Ovary (tissue), 10 donors: ENCODE measurements at regions of chr5 and their contacts with region 1.

Region 1: GRCh38 chr5:140244525-140245025 is 58.3 kb downstream of the PFDN1 start:
- DNase-seq: peak; percentile 88 to 92 (median 90)
- H3K4me3 ChIP-seq: no peak overlapping the region
- H3K27ac ChIP-seq: no peak overlapping the region
- H3K4me1 ChIP-seq: peaks cover 16% of the 10 kb centered on the region
- H3K27me3 ChIP-seq: no peaks in the 10 kb centered on the region
- CTCF ChIP-seq: peak; percentile 78 to 83 (median 80)
- EP300 ChIP-seq: no peak
- POLR2A ChIP-seq: no peak

Region 2: GRCh38 chr5:140346348-140347101 is 102.0 kb after region 1 on chr5 and contains the start of gene HBEGF:
- intact Hi-C with region 1: loop called in 3 of 4 experiments (anchors 5 kb)
- DNase-seq: peak; percentile 78 to 88 (median 87)
- H3K4me3 ChIP-seq: peak within 1 kb of the TSS; percentile 76
- H3K27ac ChIP-seq: peak within 1 kb of the TSS; percentile 17 to 28
- H3K4me1 ChIP-seq: no peaks in the 10 kb centered on the region
- H3K27me3 ChIP-seq: no peaks in the 10 kb centered on the region
- CTCF ChIP-seq: peak; percentile 39 to 50 (median 43)
- EP300 ChIP-seq: no peak
- POLR2A ChIP-seq: peak; percentile 82
- total RNA-seq, gene HBEGF: 1.5 to 14.5 (median 5.6) TPM

Region 3: GRCh38 chr5:140351609-140352334 is 107.2 kb after region 1 on chr5:
- intact Hi-C with region 1: loop called (anchors 2 to 5 kb)
- DNase-seq: peak in 1 of 5 donors; percentile 60
- H3K4me3 ChIP-seq: no peak overlapping the region
- H3K27ac ChIP-seq: no peak overlapping the region
- H3K4me1 ChIP-seq: no peaks in the 10 kb centered on the region
- H3K27me3 ChIP-seq: no peaks in the 10 kb centered on the region
- CTCF ChIP-seq: peak; percentile 69 to 77 (median 75)
- EP300 ChIP-seq: no peak
- POLR2A ChIP-seq: no peak

Region 4: DNA sequence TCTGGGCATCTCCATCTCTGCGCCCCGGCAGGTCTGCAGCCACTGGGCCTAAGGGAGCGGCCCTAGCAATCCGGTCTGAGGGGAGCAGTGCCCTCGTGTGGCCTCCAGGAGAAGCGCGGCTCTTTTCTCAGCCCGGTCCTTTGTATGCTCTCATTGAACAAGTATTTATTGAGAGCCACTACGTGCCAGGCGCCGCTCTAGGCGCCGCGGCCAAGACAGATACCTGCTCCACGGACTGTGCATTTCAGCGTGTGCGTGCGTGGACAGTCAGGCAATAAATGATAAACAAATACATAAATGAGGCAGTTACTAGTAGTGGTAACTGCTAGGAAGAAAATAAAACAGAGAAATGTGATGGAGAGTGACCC is 113.1 kb after region 1 on chr5:
- intact Hi-C with region 1: loop called in 2 of 4 experiments (anchors 2 to 5 kb)
- DNase-seq: peak; percentile 65 to 85 (median 83)
- H3K4me3 ChIP-seq: no peak overlapping the region
- H3K27ac ChIP-seq: no peak overlapping the region
- H3K4me1 ChIP-seq: no peaks in the 10 kb centered on the region
- H3K27me3 ChIP-seq: no peaks in the 10 kb centered on the region
- CTCF ChIP-seq: peak; percentile 64 to 78 (median 75)
- EP300 ChIP-seq: no peak
- POLR2A ChIP-seq: no peak